Activated B cell treated with CpG ODN at 0.5 μM for 24 hours (primary cell): ENCODE measurements at regions of chr2 and their contacts with region 1.

Region 1: GRCh38 chr2:190679813-190680591 is 31.1 kb downstream of the NAB1 start:
- DNase-seq: peak; percentile 49
- ATAC-seq: peak; percentile 76
- H3K4me3 Mint-ChIP-seq: peak overlapping the region; percentile 72
- H3K27ac Mint-ChIP-seq: peak overlapping the region; percentile 88
- H3K4me1 Mint-ChIP-seq: peaks cover 38% of the 10 kb centered on the region
- H3K27me3 Mint-ChIP-seq: no peaks in the 10 kb centered on the region
- CTCF ChIP-seq: peak; percentile 35

Region 2: GRCh38 chr2:190382851-190383250 is 297.2 kb before region 1 on chr2:
- CTCF ChIA-PET with region 1: interaction called, 38 read pairs
- POLR2A ChIA-PET with region 1: no interaction called
- intact Hi-C with region 1: loop called (anchors 1 kb)
- DNase-seq: no peak
- ATAC-seq: peak; percentile 61
- H3K4me3 Mint-ChIP-seq: no peak overlapping the region
- H3K27ac Mint-ChIP-seq: no peak overlapping the region
- H3K4me1 Mint-ChIP-seq: peaks cover 2% of the 10 kb centered on the region
- H3K27me3 Mint-ChIP-seq: no peaks in the 10 kb centered on the region
- CTCF ChIP-seq: no peak

Region 3: GRCh38 chr2:190583507-190584337 is 96.3 kb before region 1 on chr2:
- CTCF ChIA-PET with region 1: interaction called, 5 read pairs
- POLR2A ChIA-PET with region 1: interaction called, 12 read pairs
- intact Hi-C with region 1: loop called (anchors 2 kb)
- DNase-seq: no peak
- ATAC-seq: peak; percentile 72
- H3K4me3 Mint-ChIP-seq: peak overlapping the region; percentile 62
- H3K27ac Mint-ChIP-seq: peak overlapping the region; percentile 83
- H3K4me1 Mint-ChIP-seq: peaks cover 30% of the 10 kb centered on the region
- H3K27me3 Mint-ChIP-seq: no peaks in the 10 kb centered on the region
- CTCF ChIP-seq: no peak

Region 4: GRCh38 chr2:190636373-190636772 is 43.6 kb before region 1 on chr2:
- CTCF ChIA-PET with region 1: interaction called, 12 read pairs
- POLR2A ChIA-PET with region 1: no interaction called
- intact Hi-C with region 1: no loop called
- DNase-seq: no peak
- ATAC-seq: no peak
- H3K4me3 Mint-ChIP-seq: no peak overlapping the region
- H3K27ac Mint-ChIP-seq: no peak overlapping the region
- H3K4me1 Mint-ChIP-seq: peaks cover 8% of the 10 kb centered on the region
- H3K27me3 Mint-ChIP-seq: no peaks in the 10 kb centered on the region
- CTCF ChIP-seq: no peak